A549 (cell line): ENCODE measurements at regions of chr17 and their contacts with region 1.

Region 1: DNA sequence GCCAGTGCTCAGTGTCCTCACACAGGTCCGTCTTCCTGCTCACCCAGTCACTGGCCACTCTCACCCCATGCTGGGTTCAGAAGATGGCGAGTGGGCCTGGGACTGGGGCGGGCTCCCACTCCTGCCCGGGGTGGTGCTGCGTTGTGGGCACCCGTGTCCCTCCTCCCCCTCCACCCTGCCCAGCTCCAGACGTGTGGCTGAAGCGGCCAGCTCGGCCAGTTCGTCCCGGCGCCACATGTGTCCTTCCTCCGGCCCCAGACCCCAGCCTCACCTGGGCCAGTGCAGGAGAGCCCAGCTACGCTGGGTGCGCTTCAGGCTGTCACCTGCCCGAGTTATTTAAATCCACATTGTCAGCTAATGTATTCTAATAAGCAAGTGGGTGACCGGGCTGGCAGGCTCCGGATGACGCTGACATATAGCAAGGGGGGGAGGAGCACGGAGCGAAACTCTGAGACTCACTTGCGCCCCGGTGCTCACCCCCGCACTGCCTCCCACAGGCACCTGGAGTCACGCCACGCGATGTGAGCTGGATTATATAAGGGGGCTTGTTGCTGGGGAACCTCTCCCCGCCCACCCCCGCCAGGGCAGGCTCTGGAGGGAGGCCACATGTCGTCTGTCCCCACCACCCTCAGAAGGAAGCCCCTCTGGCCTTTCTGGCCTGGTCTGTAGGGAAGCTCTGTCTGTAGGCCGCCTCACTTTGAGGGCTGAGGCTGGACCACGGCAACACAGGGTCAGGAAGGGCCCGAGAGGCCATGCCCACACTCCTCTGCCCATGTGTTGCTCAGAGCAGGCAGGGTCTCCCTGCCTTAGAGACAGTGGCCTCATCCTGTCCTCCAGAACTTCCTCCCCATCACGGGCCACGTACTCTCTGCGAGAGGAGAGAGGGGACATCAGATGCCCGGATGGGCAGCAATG is 7.1 kb upstream of the BAIAP2 start:
- DNase-seq: no peak
- ATAC-seq: no peak
- H3K4me3 ChIP-seq: no peak overlapping the region
- H3K27ac ChIP-seq: no peak overlapping the region
- H3K4me1 ChIP-seq: 0 out of 3 replicates have a peak, but pooled peaks cover 7% of the 10 kb centered on the region
- CTCF ChIP-seq: no peak
- EP300 ChIP-seq: no peak
- POLR2A ChIP-seq: no peak
- RAD21 ChIP-seq: no peak

Region 2: DNA sequence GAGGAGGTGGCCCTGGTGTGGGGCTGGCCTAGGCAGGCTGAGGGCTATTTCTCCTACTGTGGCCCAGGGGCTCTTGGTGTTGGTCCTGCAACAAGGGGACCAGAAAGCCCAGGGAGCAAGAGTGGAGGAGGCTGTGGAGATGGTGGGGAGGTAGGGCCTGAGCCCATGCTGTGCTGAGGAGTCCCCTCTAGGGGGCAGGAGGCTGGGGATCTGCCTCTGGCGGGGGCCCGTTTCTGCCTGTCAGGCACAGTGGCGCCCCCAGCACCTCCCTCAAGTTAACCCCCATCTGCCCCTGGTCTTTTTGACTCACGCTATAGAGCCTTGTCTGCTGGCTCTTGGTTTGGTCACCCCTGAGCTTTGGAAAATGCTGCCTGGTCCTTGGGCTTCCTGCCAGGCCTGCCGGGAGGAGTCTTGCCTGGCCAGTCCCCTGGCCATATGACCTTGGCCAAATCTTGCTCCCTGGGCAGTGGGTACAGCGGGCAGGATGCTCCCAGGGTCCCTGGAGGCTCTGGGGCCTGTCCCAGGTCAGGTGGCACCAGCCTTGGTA is 13.0 kb after region 1 on chr17:
- CTCF ChIA-PET with region 1: interaction called, 26 read pairs
- POLR2A ChIA-PET with region 1: interaction called, 4 read pairs
- DNase-seq: peak; percentile 45 to 77
- ATAC-seq: peak; percentile 48 to 74
- H3K4me3 ChIP-seq: no peak overlapping the region
- H3K27ac ChIP-seq: peak overlapping the region; percentile 70 to 83
- H3K4me1 ChIP-seq: peaks cover 55% of the 10 kb centered on the region
- CTCF ChIP-seq: peak; percentile 55
- EP300 ChIP-seq: no peak
- POLR2A ChIP-seq: no peak
- RAD21 ChIP-seq: no peak

Region 3: GRCh38 chr17:81064678-81065475 is 37.0 kb after region 1 on chr17:
- CTCF ChIA-PET with region 1: interaction called, 21 read pairs
- POLR2A ChIA-PET with region 1: no interaction called
- DNase-seq: no peak
- ATAC-seq: no peak
- H3K4me3 ChIP-seq: no peak overlapping the region
- H3K27ac ChIP-seq: no peak overlapping the region
- H3K4me1 ChIP-seq: no peaks in the 10 kb centered on the region
- CTCF ChIP-seq: no peak
- EP300 ChIP-seq: no peak
- POLR2A ChIP-seq: no peak
- RAD21 ChIP-seq: no peak

Region 4: GRCh38 chr17:81076141-81076679 is 48.4 kb after region 1 on chr17:
- CTCF ChIA-PET with region 1: interaction called, 22 read pairs
- POLR2A ChIA-PET with region 1: no interaction called
- DNase-seq: no peak
- ATAC-seq: no peak
- H3K4me3 ChIP-seq: no peak overlapping the region
- H3K27ac ChIP-seq: no peak overlapping the region
- H3K4me1 ChIP-seq: peaks cover 5% of the 10 kb centered on the region; the same call in 1 of the 3 replicates
- CTCF ChIP-seq: no peak
- EP300 ChIP-seq: no peak
- POLR2A ChIP-seq: no peak
- RAD21 ChIP-seq: no peak